Activated T-helper 2 cell treated with anti-CD3 and anti-CD28 coated beads, Interferon-gamma antibody, Interleukin-2, Interleukin-4, amounts not matched to agents 10 μg/mL and 5 μg/mL and 100 μg/mL, durations not matched to agents 14 hours and 24 hours and 36 hours (primary cell): ENCODE measurements at regions of chr16 and their contacts with region 1.

Region 1: GRCh38 chr16:81891736-81892357 is 112.8 kb downstream of the PLCG2 start:
- DNase-seq: no peak
- H3K4me3 Mint-ChIP-seq: no peak overlapping the region
- H3K27ac Mint-ChIP-seq: no peak overlapping the region
- H3K4me1 Mint-ChIP-seq: peaks cover 1% of the 10 kb centered on the region
- H3K27me3 Mint-ChIP-seq: no peaks in the 10 kb centered on the region

Region 2: DNA sequence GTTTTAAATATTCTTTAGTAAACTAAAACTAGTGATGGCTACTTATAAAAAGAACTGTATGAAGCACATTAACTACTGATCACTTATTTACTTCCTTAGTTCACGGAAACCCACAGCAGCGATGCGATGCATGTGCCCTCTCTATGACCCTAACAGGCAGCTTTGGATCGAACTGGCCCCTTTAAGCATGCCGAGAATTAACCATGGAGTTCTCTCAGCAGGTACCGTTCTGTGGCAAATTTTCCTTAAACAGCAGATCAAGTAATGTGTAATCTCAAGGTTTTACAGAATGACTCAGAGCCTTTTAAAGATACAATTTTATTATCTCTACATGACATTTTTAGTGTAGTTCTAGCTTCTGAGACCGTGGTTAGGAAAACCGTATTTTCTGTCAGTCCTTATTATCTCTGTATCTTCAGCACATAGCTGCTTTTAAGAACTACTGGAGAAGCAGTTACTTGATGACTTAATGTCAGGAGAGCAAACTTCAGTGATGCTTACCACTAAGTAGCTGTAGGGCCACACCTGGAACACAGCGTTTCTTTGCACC is 534.1 kb before region 1 on chr16:
- intact Hi-C with region 1: no loop called
- DNase-seq: no peak
- H3K4me3 Mint-ChIP-seq: no peak overlapping the region
- H3K27ac Mint-ChIP-seq: no peak overlapping the region
- H3K4me1 Mint-ChIP-seq: peaks cover 10% of the 10 kb centered on the region
- H3K27me3 Mint-ChIP-seq: no peaks in the 10 kb centered on the region

Region 3: DNA sequence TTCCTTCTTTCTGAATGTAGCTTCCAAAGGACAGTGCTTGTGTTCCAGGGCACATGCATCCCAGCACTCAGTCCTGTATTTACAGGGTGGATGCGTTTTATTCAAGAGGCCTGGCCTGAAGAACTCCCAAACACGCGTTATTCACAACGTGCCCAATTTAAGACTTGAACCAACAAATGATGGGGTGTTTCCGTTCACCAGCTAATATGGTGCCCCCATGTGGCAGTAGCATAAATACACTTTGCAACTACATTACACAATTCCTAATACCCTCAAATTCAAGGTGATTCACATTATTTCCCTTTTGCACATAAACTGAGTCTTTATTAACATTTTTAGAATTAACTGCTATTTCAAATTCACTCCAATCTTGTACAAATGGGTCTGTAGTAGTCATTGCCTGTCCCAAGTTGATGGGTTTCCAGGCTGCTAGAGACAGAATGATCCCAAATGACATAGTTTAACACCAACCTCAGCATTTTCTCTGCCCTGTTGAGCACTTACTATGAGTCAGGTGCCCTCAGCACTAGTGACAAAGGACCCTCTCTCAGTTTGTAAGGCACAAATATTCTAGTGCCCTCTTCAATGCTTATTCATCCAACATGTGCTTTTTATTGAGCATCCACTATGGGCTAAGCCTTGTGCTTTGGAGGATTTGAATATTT is 170.1 kb after region 1 on chr16:
- intact Hi-C with region 1: loop called (anchors 2 kb)
- DNase-seq: no peak
- H3K4me3 Mint-ChIP-seq: no peak overlapping the region
- H3K27ac Mint-ChIP-seq: no peak overlapping the region
- H3K4me1 Mint-ChIP-seq: peaks cover 4% of the 10 kb centered on the region
- H3K27me3 Mint-ChIP-seq: peaks cover 11% of the 10 kb centered on the region